ENCODE measurements at regions of chr16 and their contacts with region 1.

Region 1: DNA sequence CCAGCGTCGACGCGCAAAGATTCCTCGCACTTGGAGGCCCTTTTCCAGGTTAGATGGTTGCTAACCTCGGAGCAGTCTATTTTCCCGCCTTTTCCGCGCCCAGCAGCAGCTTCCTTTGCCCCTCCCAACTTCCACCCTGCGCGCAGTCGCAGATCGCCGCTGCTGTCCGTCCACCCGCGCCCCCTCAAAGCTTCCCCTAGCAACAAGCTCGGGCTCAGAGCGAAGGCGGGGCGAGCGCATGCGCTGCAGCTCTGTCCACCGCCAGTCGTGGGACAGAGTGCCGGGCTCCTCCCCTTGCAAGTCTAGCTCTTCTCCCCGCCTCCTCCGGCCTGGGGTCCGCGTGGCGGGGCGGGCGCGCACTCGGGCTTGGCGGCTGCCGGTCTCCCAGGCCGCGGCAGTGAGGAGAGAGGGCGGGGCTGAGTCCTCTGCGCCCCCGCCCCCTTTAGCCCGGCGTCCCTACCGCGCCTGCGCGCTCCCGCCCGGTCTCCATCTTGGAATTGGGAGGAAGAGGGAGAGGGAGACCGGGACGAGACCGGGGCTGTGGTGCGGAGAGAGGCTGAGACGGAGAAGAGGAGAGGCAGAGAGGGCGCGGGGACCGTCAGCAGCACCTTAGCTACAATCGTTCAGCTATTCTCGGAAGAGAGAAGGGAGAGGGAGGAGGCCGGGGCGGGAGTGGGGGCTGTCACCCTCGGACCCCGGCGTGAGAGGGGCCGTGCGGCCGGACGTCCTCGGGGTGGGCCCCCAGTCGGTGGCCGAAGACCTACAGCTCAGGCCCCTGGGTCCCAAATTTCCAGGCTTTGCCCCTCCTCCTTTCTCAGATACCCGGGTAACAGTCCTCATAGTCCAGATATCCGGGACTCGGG is at the start of gene TAOK2:
- DNase-seq: peak; percentile 99
- H3K4me3 ChIP-seq: peak within 1 kb of the TSS; percentile 76 to 98 (median 78)
- H3K27ac ChIP-seq: peak within 1 kb of the TSS; percentile 65
- H3K4me1 ChIP-seq: peaks cover 16% of the 10 kb centered on the region
- H3K27me3 ChIP-seq: no peaks in the 10 kb centered on the region
- CTCF ChIP-seq: no peak
- total RNA-seq, gene TAOK2: 39.7 to 40.8 TPM

Region 2: DNA sequence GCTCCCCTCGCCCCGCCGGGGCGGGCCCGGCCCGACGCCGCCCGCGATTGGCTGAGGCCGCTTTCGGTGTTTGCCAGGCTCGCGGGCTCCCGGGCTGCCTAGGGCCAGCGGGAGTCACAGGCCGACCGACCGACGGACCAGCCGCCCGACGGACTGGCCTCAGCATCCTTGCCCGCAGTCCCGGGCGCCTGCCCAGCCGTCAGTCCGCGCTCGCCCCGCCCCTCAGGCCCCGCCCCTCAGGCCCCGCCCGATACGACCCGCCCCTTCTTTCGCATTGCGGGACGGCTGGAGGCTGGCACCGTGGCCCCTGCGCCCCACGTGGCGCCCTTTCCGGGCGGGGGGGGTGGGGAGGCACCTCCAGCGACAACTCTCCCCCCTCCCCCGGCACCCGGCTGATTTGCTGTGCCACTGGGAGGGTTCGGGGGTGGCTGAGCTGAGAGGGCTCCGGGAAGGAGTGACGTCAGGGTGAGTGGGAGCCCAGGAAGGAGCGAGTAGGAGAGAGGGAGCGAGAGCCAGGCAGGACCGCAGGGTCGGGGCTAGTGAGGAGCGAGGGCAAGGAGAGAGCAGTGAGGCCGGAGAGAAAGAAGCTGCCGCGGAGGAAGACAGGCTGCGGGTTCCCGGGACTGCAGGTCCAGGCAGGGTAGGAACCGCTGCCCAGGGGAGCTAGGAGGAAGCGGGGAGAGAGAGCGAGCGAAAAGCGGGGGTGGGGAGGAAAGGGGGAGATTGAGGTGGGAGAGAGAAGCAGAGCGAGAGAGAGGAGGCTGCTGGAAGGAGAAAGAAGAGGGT is 73.3 kb before region 1 on chr16 and contains the start of gene ASPHD1:
- CTCF ChIA-PET with region 1: no interaction called
- dilution Hi-C with region 1: no loop called
- in situ Hi-C with region 1: no loop called
- intact Hi-C with region 1: loop called (anchors 1 kb)
- DNase-seq: peak; percentile 84
- H3K4me3 ChIP-seq: peak within 1 kb of the TSS; percentile 61 to 70 (median 68)
- H3K27ac ChIP-seq: no peak within 1 kb of the TSS
- H3K4me1 ChIP-seq: peaks cover 21% of the 10 kb centered on the region
- H3K27me3 ChIP-seq: peaks cover 4% of the 10 kb centered on the region
- CTCF ChIP-seq: no peak
- total RNA-seq, gene ASPHD1: 1.5 to 14.7 TPM

Region 3: GRCh38 chr16:29926005-29926710 is 47.5 kb before region 1 on chr16 and contains the start of gene KCTD13:
- CTCF ChIA-PET with region 1: no interaction called
- dilution Hi-C with region 1: loop called (anchors 5 kb)
- in situ Hi-C with region 1: no loop called
- intact Hi-C with region 1: loop called (anchors 1 kb)
- DNase-seq: peak; percentile 80
- H3K4me3 ChIP-seq: peak within 1 kb of the TSS; percentile 40 to 98 (median 89)
- H3K27ac ChIP-seq: peak within 1 kb of the TSS; percentile 63
- H3K4me1 ChIP-seq: peaks cover 10% of the 10 kb centered on the region
- H3K27me3 ChIP-seq: no peaks in the 10 kb centered on the region
- CTCF ChIP-seq: no peak
- total RNA-seq, gene KCTD13: 11.8 to 27.4 TPM

Region 4: GRCh38 chr16:30075507-30076275 is 102.1 kb after region 1 on chr16 and contains the start of gene PPP4C:
- CTCF ChIA-PET with region 1: no interaction called
- dilution Hi-C with region 1: loop called (anchors 5 kb)
- in situ Hi-C with region 1: no loop called
- intact Hi-C with region 1: no loop called
- DNase-seq: peak; percentile 85
- H3K4me3 ChIP-seq: peak within 1 kb of the TSS; percentile 78 to 99 (median 89)
- H3K27ac ChIP-seq: peak within 1 kb of the TSS; percentile 80
- H3K4me1 ChIP-seq: peaks cover 14% of the 10 kb centered on the region
- H3K27me3 ChIP-seq: no peaks in the 10 kb centered on the region
- CTCF ChIP-seq: no peak
- total RNA-seq, gene PPP4C: 125 to 221 TPM

Measured in mammary epithelial cell (primary cell).